Naive thymus-derived CD4-positive, alpha-beta T cell (primary cell): ENCODE measurements at regions of chr2 and their contacts with region 1.

Region 1: GRCh38 chr2:237858294-237859081 is 935 bp upstream of the RAMP1 start:
- DNase-seq: peak in 7 of 9 donors; percentile 26 to 51 (median 44)
- ATAC-seq: peak; percentile 76
- H3K4me3 ChIP-seq: no peak overlapping the region
- H3K4me3 Mint-ChIP-seq: peak overlapping the region; percentile 46 to 86 (median 71)
- H3K27ac ChIP-seq: no peak overlapping the region
- H3K27ac Mint-ChIP-seq: peak overlapping the region in 2 of 9 donors; percentile 72 to 73
- H3K4me1 ChIP-seq: no peaks in the 10 kb centered on the region
- H3K4me1 Mint-ChIP-seq: peaks cover 0 to 15% (median 13%) of the 10 kb centered on the region in 7 donors
- H3K27me3 ChIP-seq: peaks cover 4 to 6% of the 10 kb centered on the region in 2 donors
- H3K27me3 Mint-ChIP-seq: peaks cover 23 to 63% (median 29%) of the 10 kb centered on the region in 5 donors

Region 2: GRCh38 chr2:237354892-237355291 is 503.6 kb before region 1 on chr2:
- CTCF ChIA-PET with region 1: no interaction called
- POLR2A ChIA-PET with region 1: no interaction called
- intact Hi-C with region 1: no loop called
- DNase-seq: no peak
- ATAC-seq: no peak
- H3K4me3 ChIP-seq: no peak overlapping the region
- H3K4me3 Mint-ChIP-seq: no peak overlapping the region
- H3K27ac ChIP-seq: no peak overlapping the region
- H3K27ac Mint-ChIP-seq: no peak overlapping the region
- H3K4me1 ChIP-seq: no peaks in the 10 kb centered on the region
- H3K4me1 Mint-ChIP-seq: peaks cover 0 to 2% (median 0%) of the 10 kb centered on the region in 7 donors
- H3K27me3 ChIP-seq: no peaks in the 10 kb centered on the region
- H3K27me3 Mint-ChIP-seq: no peaks in the 10 kb centered on the region

Region 3: GRCh38 chr2:237898057-237898414 is 39.5 kb after region 1 on chr2:
- CTCF ChIA-PET with region 1: interaction called, 3 read pairs
- POLR2A ChIA-PET with region 1: no interaction called
- intact Hi-C with region 1: loop called (anchors 1 kb)
- DNase-seq: no peak
- ATAC-seq: no peak
- H3K4me3 ChIP-seq: peak overlapping the region; percentile 33
- H3K4me3 Mint-ChIP-seq: peak overlapping the region in 9 of 10 donors; percentile 29 to 86 (median 71)
- H3K27ac ChIP-seq: peak overlapping the region; percentile 38
- H3K27ac Mint-ChIP-seq: peak overlapping the region; percentile 87 to 96 (median 94)
- H3K4me1 ChIP-seq: peaks cover 19 to 29% of the 10 kb centered on the region in 2 donors
- H3K4me1 Mint-ChIP-seq: peaks cover 30 to 59% (median 48%) of the 10 kb centered on the region in 7 donors
- H3K27me3 ChIP-seq: no peaks in the 10 kb centered on the region
- H3K27me3 Mint-ChIP-seq: no peaks in the 10 kb centered on the region

Region 4: DNA sequence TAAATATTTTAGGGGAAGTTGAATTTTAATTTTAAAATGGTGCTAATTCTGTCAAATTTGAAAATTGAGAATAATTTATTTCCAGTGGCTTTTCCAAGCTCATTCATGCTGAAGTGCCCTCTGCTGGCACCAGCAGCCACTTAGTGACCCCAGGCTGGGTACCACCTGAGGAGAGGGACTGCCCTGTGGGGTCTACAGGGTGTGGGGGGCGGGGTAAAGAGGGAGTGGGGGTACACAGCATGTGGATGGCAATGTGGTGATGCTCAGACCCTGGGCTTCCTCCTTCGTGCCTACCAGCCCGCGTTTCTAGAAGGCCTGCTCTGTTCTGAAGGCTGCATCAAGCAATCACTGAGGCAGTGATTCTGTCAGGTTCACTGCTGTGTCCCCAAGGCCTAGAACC is 157.2 kb after region 1 on chr2:
- CTCF ChIA-PET with region 1: interaction called, 5 read pairs
- POLR2A ChIA-PET with region 1: no interaction called
- intact Hi-C with region 1: loop called (anchors 1 to 2 kb)
- DNase-seq: no peak
- ATAC-seq: no peak
- H3K4me3 ChIP-seq: no peak overlapping the region
- H3K4me3 Mint-ChIP-seq: no peak overlapping the region
- H3K27ac ChIP-seq: no peak overlapping the region
- H3K27ac Mint-ChIP-seq: peak overlapping the region in 2 of 9 donors; percentile 29 to 41
- H3K4me1 ChIP-seq: no peaks in the 10 kb centered on the region
- H3K4me1 Mint-ChIP-seq: peaks cover 7 to 22% (median 15%) of the 10 kb centered on the region in 7 donors
- H3K27me3 ChIP-seq: no peaks in the 10 kb centered on the region
- H3K27me3 Mint-ChIP-seq: no peaks in the 10 kb centered on the region

Region 5: DNA sequence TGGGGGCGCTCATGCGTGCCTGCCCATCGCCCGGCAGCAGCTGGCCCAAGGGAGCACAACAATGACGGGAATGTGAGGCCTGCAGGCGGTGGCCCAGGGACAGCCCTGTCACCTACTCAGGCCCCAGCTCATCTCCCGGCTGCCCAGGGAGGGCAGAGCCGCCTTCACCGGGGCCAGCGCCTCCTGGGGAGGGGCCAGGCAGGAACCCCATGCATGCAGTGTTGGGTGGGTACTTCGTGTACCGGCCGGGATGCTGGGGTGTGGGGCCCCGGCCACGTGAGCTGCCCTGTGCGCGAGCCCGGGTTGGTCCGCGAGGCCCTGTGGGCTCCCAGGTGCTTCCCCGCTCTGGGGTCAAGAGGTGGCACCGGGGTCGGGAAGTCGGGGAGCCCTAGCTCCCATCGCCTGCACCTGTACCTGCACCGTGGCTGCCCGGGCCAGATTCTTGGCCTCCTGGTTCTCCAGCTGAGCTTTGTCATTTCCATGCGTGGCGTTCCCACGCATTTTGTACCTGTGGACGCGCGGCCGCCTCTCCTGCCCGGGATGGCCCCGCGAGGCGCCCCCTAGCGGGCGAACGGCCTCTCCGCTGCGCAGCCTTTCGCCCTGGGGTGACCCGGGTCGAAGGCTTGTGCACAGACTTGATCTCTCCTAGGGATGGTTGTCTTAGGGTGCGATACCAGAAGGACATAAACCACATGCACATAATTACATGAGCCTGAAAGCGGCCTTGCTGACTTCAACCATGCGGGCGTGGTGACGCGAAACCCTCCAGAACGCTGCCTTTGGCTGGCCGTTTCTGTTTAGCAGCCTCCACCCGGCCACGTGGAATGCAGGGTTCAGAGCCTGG is 280.9 kb after region 1 on chr2:
- CTCF ChIA-PET with region 1: no interaction called
- POLR2A ChIA-PET with region 1: no interaction called
- intact Hi-C with region 1: loop called in 1 of 2 experiments (anchors 5 kb)
- DNase-seq: peak in 3 of 9 donors; percentile 15 to 62 (median 22)
- ATAC-seq: no peak
- H3K4me3 ChIP-seq: no peak overlapping the region
- H3K4me3 Mint-ChIP-seq: no peak overlapping the region
- H3K27ac ChIP-seq: no peak overlapping the region
- H3K27ac Mint-ChIP-seq: no peak overlapping the region
- H3K4me1 ChIP-seq: peaks cover 0 to 6% of the 10 kb centered on the region in 2 donors
- H3K4me1 Mint-ChIP-seq: peaks cover 0 to 8% (median 7%) of the 10 kb centered on the region in 7 donors
- H3K27me3 ChIP-seq: no peaks in the 10 kb centered on the region
- H3K27me3 Mint-ChIP-seq: no peaks in the 10 kb centered on the region

Region 6: DNA sequence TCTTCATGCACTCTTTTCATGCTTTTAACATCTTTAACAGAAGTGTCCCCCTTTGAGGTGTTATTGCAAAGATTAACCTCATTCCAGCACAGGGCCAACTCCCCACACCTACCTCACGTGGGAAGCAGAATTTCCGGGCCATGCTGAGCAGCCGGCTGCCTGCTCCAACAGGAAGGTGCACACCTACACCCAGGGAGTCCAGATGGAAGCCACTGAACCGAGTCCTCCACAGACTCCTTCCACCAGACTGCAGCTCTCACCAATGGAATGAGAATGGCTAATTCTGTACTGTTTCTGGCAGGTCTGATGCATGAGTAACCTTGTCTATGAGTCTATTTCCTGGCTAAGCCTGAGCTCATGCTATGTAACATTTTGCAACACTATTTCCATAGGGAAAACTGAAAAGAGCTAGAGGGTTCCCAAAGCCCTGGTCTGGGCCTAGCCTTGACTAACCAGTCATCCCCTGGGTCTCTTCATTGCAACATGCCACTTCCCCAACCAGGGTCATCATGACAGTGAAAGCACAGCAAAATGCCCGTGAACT is 311.3 kb after region 1 on chr2:
- CTCF ChIA-PET with region 1: no interaction called
- POLR2A ChIA-PET with region 1: no interaction called
- intact Hi-C with region 1: loop called in 1 of 2 experiments (anchors 10 kb)
- DNase-seq: no peak
- ATAC-seq: no peak
- H3K4me3 ChIP-seq: no peak overlapping the region
- H3K4me3 Mint-ChIP-seq: no peak overlapping the region
- H3K27ac ChIP-seq: no peak overlapping the region
- H3K27ac Mint-ChIP-seq: no peak overlapping the region
- H3K4me1 ChIP-seq: no peaks in the 10 kb centered on the region
- H3K4me1 Mint-ChIP-seq: peaks cover 0 to 7% (median 0%) of the 10 kb centered on the region in 7 donors
- H3K27me3 ChIP-seq: no peaks in the 10 kb centered on the region
- H3K27me3 Mint-ChIP-seq: peaks cover 4 to 7% (median 7%) of the 10 kb centered on the region in 5 donors

Region 7: DNA sequence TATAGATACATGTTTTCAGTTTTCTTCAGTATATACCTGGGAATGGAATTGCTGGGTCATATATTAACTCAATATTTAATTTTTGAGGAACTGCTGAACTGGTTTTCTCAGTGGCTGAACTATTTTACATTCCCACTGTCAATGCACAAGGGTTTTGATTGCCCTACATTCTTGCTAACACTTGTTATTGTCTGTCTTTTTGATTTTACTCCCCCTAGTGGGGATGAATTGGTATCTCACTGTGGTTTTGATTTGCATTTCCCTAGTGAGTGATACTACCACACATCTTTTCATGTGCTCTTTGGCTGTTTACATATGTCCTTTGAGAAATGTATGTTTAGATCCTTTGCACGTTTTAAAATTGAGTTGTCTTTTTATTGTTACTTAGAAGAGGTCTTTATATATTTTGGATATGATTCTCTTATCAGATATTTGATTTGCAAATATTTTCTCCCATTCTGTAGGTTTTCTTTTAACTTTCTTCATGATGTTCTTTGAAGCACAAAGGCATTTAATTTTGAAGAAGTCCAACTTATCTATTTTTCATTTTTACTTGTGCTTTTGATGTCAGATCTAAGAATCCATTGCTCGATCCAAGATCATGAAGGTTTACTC is 604.4 kb after region 1 on chr2:
- CTCF ChIA-PET with region 1: no interaction called
- POLR2A ChIA-PET with region 1: no interaction called
- intact Hi-C with region 1: loop called in 1 of 2 experiments (anchors 2 kb)
- DNase-seq: peak in 6 of 9 donors; percentile 16 to 67 (median 58)
- ATAC-seq: peak; percentile 76
- H3K4me3 ChIP-seq: no peak overlapping the region
- H3K4me3 Mint-ChIP-seq: no peak overlapping the region
- H3K27ac ChIP-seq: no peak overlapping the region
- H3K27ac Mint-ChIP-seq: no peak overlapping the region
- H3K4me1 ChIP-seq: no peaks in the 10 kb centered on the region
- H3K4me1 Mint-ChIP-seq: peaks cover 0 to 6% (median 0%) of the 10 kb centered on the region in 7 donors
- H3K27me3 ChIP-seq: no peaks in the 10 kb centered on the region
- H3K27me3 Mint-ChIP-seq: peaks cover 0 to 10% (median 0%) of the 10 kb centered on the region in 5 donors